HCT116 (cell line): ENCODE measurements at regions of chr10 and their contacts with region 1.

Region 1: GRCh38 chr10:5434017-5434753 is 21.8 kb downstream of the NET1 start:
- DNase-seq: peak; percentile 37
- ATAC-seq: peak; percentile 83
- H3K4me3 ChIP-seq: no peak overlapping the region
- H3K27ac ChIP-seq: no peak overlapping the region
- H3K4me1 ChIP-seq: no peaks in the 10 kb centered on the region
- H3K27me3 ChIP-seq: no peaks in the 10 kb centered on the region
- CTCF ChIP-seq: peak; percentile 57 to 80 (median 69); a peak in 5 of 6 replicates
- POLR2A ChIP-seq: no peak
- RAD21 ChIP-seq: peak; percentile 74

Region 2: GRCh38 chr10:4813023-4813422 is 621.2 kb before region 1 on chr10:
- CTCF ChIA-PET with region 1: interaction called, 20 read pairs
- POLR2A ChIA-PET with region 1: no interaction called
- RAD21 ChIA-PET with region 1: no interaction called
- intact Hi-C with region 1: loop called (anchors 2 kb)
- DNase-seq: peak; percentile 36
- ATAC-seq: peak; percentile 74
- H3K4me3 ChIP-seq: no peak overlapping the region
- H3K27ac ChIP-seq: no peak overlapping the region
- H3K4me1 ChIP-seq: peaks cover 0 to 15% of the 10 kb centered on the region in 2 experiments; a peak in 1 of 4 replicates
- H3K27me3 ChIP-seq: no peaks in the 10 kb centered on the region
- CTCF ChIP-seq: no peak
- POLR2A ChIP-seq: no peak
- RAD21 ChIP-seq: no peak

Region 3: DNA sequence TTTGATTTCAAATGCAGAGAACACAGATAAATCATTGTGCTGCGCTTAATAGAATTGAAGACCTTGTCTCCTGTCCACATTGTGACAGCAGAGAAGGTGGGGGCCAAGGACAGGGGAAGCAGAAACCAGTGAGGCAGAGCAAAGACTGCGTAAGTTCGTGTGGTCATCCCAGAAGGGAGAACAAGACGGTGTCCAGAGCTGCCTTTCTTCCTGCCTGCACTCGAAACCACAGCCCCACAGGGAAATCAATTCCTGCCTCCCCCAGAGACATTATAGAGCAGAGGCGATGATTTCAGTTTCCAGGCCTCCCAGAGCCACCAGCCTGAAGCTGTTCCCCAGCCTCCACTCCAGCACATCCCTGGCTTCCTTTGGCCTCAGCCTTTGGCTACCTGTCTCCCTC is 109.1 kb before region 1 on chr10:
- CTCF ChIA-PET with region 1: no interaction called
- POLR2A ChIA-PET with region 1: no interaction called
- RAD21 ChIA-PET with region 1: no interaction called
- intact Hi-C with region 1: no loop called
- DNase-seq: no peak
- ATAC-seq: no peak
- H3K4me3 ChIP-seq: no peak overlapping the region
- H3K27ac ChIP-seq: no peak overlapping the region
- H3K4me1 ChIP-seq: no peaks in the 10 kb centered on the region
- H3K27me3 ChIP-seq: peaks cover 3% of the 10 kb centered on the region; the same call in 1 of the 2 replicates
- CTCF ChIP-seq: no peak
- POLR2A ChIP-seq: no peak
- RAD21 ChIP-seq: no peak

Region 4: DNA sequence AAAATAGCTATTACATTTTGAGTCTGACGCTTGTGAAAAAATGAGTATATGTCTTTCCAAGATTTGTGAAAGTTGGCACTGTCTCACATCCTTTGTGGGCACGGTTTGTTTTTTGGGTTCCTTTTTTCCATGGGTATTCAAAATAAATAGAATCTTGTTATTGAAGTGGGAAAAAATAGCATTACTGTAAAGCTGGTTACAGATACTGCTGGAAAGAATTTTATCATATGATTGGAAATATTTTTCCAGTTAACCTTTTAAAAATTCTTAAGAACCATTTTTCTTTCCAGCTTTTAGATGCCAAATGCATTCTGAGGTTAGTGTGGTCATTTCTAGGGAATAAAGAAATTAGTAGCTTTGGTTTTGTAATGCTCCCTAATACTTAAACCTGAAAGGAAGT is 10.4 kb before region 1 on chr10:
- CTCF ChIA-PET with region 1: interaction called, 23 read pairs
- POLR2A ChIA-PET with region 1: no interaction called
- RAD21 ChIA-PET with region 1: no interaction called
- intact Hi-C with region 1: no loop called
- DNase-seq: no peak
- ATAC-seq: no peak
- H3K4me3 ChIP-seq: no peak overlapping the region
- H3K27ac ChIP-seq: no peak overlapping the region
- H3K4me1 ChIP-seq: no peaks in the 10 kb centered on the region
- H3K27me3 ChIP-seq: no peaks in the 10 kb centered on the region
- CTCF ChIP-seq: no peak
- POLR2A ChIP-seq: no peak
- RAD21 ChIP-seq: no peak